Esophagus squamous epithelium (tissue), 5 donors: ENCODE measurements at regions of chr7 and their contacts with region 1.

Region 1: DNA sequence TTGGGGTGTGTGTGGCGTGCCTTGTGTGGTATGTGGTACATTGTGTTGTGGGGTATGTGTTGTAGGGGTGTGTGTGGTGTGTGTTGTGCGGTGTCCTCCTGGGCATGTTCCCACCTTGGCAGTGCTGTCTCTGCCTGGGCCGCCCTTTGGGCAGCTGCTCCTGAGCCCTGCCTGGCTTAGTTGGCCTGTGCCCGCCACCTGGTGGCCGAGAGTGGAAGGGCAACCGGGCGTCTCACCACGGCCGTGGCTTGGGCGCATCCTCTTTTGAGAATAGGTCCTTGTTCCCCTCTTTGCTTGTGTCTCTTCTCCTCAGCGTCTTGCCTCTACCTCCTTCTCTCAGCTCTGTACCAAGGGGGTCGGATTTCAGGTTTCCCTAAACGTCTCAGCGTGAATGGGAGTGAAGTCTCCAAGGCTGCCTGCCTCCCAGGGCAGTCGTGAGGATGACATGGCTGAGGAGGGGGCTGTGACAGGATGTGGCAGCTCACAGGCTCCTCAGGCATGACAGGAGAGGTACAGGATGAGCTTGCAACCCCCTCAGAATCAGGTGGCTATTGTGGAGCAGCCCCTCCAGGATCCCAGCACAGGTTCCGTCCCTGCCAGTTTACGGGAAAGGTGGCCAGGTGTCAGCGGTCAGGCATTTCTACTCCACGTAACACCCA is 98.4 kb upstream of the PODXL start:
- DNase-seq: peak; percentile 5
- H3K4me3 ChIP-seq: no peak overlapping the region
- H3K27ac ChIP-seq: no peak overlapping the region
- H3K4me1 ChIP-seq: no peaks in the 10 kb centered on the region
- H3K27me3 ChIP-seq: peaks cover 0 to 4% (median 0%) of the 10 kb centered on the region in 4 donors
- CTCF ChIP-seq: peak; percentile 61 to 96 (median 94)
- POLR2A ChIP-seq: no peak

Region 2: DNA sequence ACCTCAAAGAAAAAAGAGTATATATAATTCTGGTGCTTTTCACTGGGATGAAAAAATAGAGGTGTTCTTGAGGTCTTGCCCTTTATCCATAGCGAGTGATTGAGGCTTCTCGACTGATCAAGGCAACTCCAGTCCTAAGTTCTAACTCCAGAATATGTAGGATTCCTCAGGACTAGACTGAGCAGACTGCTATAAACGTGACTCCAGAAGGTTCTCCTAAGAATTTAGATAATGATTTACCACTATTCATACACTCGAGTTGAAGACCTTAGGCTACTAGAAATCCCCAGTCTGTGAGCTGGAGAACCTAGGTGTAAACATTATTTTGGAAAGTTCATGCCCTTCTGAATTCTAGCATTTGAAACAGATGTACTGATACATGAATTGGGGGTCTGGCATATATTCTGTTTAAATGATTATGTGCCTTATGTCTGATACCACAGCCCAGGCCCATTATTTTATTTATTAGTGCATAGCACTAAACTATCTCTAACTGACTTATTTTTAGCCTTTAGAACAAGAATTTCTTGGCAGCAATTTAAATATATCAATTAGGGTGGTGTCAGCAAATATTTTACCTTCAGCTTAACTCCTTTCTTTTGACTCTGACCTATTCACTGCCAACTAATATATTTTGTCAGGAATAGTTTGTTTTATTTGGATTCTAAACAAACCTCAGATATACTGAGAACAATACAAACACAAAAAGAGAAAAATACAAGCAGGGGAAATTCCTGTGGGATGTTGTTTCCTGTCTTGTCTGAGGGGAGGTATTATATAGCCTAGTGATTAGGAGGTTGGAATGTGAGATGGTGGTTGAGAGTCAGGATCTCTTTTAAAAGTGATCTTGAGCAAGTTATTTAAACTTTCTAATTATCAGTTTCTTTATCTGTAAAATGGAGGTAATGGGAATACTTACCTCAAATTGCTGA is 174.1 kb before region 1 on chr7:
- intact Hi-C with region 1: no loop called
- DNase-seq: no peak
- H3K4me3 ChIP-seq: no peak overlapping the region
- H3K27ac ChIP-seq: no peak overlapping the region
- H3K4me1 ChIP-seq: no peaks in the 10 kb centered on the region
- H3K27me3 ChIP-seq: no peaks in the 10 kb centered on the region
- CTCF ChIP-seq: no peak
- POLR2A ChIP-seq: no peak

Region 3: GRCh38 chr7:131507592-131508331 is 147.0 kb before region 1 on chr7:
- intact Hi-C with region 1: loop called (anchors 5 kb)
- DNase-seq: peak; percentile 15
- H3K4me3 ChIP-seq: no peak overlapping the region
- H3K27ac ChIP-seq: no peak overlapping the region
- H3K4me1 ChIP-seq: peaks cover 0 to 27% (median 12%) of the 10 kb centered on the region in 3 donors
- H3K27me3 ChIP-seq: peaks cover 0 to 9% (median 0%) of the 10 kb centered on the region in 4 donors
- CTCF ChIP-seq: peak; percentile 84 to 93 (median 86)
- POLR2A ChIP-seq: no peak